AG04450 (cell line): ENCODE measurements at regions of chr3 and their contacts with region 1.

Region 1: GRCh38 chr3:16060358-16060852 is 114.1 kb upstream of the GALNT15 start:
- DNase-seq: peak; percentile 99
- H3K4me3 ChIP-seq: peak overlapping the region; percentile 29; the same call in 1 of the 2 replicates
- H3K27ac ChIP-seq: peak overlapping the region; percentile 100
- H3K27me3 ChIP-seq: no peaks in the 10 kb centered on the region
- CTCF ChIP-seq: peak; percentile 43

Region 2: GRCh38 chr3:15982667-15983145 is 77.7 kb before region 1 on chr3:
- CTCF ChIA-PET with region 1: no interaction called
- POLR2A ChIA-PET with region 1: interaction called, 12 read pairs
- DNase-seq: peak; percentile 84
- H3K4me3 ChIP-seq: peak overlapping the region; percentile 38
- H3K27ac ChIP-seq: peak overlapping the region; percentile 97
- H3K27me3 ChIP-seq: no peaks in the 10 kb centered on the region
- CTCF ChIP-seq: no peak

Region 3: DNA sequence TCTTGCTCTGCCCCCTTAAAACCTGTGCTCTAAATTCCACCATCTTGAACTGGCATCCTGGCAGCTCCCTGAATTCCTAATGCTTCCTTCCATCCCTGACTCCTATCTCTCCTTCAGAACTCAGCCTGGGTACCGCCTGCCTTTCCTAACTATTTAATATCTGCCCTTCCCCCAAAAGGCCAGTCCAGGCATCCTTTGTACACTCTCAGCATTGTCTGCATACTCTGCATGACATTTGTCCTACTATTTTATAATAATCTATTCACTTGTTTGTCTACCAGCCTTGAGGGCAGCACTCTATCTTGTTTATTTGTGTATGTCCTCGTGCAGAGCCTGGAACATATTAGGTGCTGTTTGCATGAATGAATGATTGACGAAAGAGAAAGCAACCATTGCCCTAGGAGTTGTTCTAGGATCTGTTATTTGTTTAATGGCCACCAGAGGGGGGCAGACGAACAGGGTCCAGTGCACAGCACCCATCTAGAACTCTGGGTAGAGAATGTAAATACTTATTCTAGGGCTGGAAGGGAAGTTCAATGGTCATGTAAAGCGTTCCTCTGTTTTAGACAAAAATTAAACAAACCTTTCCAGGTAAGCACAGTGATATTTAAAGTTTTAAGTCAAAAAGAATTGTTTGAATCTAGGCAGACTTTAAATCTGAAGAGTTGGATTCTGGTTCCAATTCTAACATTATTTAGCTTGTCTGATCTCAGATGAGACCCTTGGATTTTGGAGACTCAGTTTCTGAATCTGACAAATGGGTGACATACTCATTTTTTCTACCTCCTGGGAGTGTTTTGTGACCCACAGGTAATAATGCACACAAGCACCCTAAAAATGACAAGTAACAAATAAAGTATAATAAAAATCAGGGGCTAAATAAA is 11.7 kb before region 1 on chr3:
- CTCF ChIA-PET with region 1: interaction called, 61 read pairs
- POLR2A ChIA-PET with region 1: interaction called, 3 read pairs
- DNase-seq: peak; percentile 50
- H3K4me3 ChIP-seq: no peak overlapping the region
- H3K27ac ChIP-seq: no peak overlapping the region
- H3K27me3 ChIP-seq: no peaks in the 10 kb centered on the region
- CTCF ChIP-seq: peak; percentile 78

Region 4: DNA sequence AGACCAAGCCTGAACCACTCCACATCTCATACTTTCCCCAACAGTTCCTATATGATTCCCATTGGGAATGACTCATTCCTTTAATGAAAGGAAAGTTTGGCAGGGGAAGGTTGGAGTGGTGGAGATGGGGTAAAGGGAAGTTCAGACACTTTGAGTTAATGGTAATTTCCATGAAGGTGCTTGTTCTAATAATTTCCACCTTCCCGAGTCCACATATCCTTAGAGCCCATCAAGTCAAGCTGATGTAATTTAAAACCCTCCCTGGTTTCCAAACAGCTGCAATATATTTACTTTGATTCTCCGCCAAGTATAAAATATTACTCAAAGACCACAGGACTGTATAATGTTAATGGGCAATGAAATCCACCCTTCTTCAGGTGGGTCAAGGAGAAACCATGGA is 19.1 kb after region 1 on chr3:
- CTCF ChIA-PET with region 1: no interaction called
- POLR2A ChIA-PET with region 1: no interaction called
- DNase-seq: no peak
- H3K4me3 ChIP-seq: no peak overlapping the region
- H3K27ac ChIP-seq: no peak overlapping the region
- H3K27me3 ChIP-seq: no peaks in the 10 kb centered on the region
- CTCF ChIP-seq: no peak

Region 5: GRCh38 chr3:16090024-16090423 is 29.6 kb after region 1 on chr3:
- CTCF ChIA-PET with region 1: interaction called, 3 read pairs
- POLR2A ChIA-PET with region 1: interaction called, 34 read pairs
- DNase-seq: peak; percentile 95
- H3K4me3 ChIP-seq: no peak overlapping the region
- H3K27ac ChIP-seq: peak overlapping the region; percentile 75
- H3K27me3 ChIP-seq: no peaks in the 10 kb centered on the region
- CTCF ChIP-seq: no peak

Region 6: GRCh38 chr3:16102905-16103364 is 42.5 kb after region 1 on chr3:
- CTCF ChIA-PET with region 1: interaction called, 3 read pairs
- POLR2A ChIA-PET with region 1: interaction called, 28 read pairs
- DNase-seq: peak; percentile 78
- H3K4me3 ChIP-seq: no peak overlapping the region
- H3K27ac ChIP-seq: peak overlapping the region; percentile 99
- H3K27me3 ChIP-seq: no peaks in the 10 kb centered on the region
- CTCF ChIP-seq: peak; percentile 33

Region 7: GRCh38 chr3:16124636-16125035 is 64.2 kb after region 1 on chr3:
- CTCF ChIA-PET with region 1: interaction called, 6 read pairs
- POLR2A ChIA-PET with region 1: interaction called, 37 read pairs
- DNase-seq: peak; percentile 97
- H3K4me3 ChIP-seq: no peak overlapping the region
- H3K27ac ChIP-seq: peak overlapping the region; percentile 96
- H3K27me3 ChIP-seq: no peaks in the 10 kb centered on the region
- CTCF ChIP-seq: no peak

Region 8: DNA sequence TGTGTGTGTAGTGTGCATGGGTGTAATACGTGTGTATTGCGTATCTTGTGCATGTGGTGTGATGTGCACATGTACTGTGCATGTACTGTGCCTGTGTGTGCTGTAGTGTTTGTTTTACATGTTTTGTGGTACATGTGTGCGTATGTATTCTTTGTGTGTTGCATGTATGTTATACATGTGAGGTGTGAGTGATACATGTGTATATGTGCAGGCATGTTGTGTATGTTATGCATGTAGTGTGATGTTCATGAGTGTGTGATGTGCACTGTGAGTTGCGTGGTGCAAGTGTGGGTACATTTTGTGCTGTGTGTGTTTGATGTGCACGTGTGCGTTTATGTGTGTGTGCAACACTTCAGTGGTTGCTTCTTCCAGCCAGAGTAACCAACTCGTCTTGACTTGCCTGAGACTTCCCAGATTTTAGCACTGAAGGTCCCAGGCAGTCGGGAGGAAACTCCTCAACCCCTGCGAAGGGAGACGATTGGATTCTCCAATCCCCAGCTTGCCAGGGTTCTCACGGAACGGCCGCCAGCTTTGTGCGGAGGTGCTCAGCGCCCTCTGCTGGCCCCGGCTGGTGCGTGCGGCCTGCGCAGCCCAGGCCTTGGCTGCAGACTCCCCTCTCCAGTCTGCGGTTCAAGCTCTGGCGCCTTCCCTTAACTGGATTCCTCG is 117.7 kb after region 1 on chr3:
- CTCF ChIA-PET with region 1: interaction called, 11 read pairs
- POLR2A ChIA-PET with region 1: interaction called, 14 read pairs
- DNase-seq: peak; percentile 76
- H3K4me3 ChIP-seq: peak overlapping the region; percentile 57
- H3K27ac ChIP-seq: no peak overlapping the region
- H3K27me3 ChIP-seq: no peaks in the 10 kb centered on the region
- CTCF ChIP-seq: peak; percentile 98